ENCODE measurements at regions of chr4 and their contacts with region 1.

Region 1: DNA sequence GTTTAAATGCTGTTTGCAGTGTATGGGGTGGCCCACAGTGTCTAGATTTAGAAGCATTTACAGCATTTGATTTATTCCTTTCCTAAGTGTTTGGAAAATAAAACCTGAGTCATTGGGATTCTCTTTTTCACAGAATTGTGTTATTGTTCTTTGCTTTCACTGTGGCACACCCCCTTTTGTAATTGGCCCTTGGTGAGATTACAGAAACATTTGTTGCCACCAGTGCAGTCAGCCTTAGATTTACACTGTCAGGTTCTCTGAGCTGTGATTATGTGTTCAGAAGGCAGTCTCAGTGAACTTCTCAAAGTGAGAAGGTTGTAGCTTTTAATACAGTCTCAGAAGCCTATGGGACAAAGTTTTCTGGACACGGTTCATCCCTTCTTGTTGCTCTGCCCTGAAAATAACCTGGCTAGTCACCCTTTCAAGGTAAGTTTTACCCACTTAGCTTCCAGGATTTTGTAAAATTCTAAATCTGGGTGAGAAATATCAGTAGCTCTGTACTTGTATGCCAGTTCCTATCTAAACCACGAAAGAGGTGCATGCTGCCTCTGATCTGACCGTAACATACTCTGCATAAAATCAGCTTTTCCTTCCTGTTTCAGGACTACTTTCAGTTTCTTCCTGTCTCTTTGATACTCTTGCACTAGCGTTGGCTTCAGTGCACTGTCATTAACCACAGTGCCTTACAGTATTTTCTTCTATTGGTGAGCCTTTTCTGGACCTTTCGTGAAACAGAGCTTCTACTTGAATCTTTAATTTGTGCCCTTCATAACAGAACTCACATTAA is 12.6 kb downstream of the RUFY3 start:
- DNase-seq: peak; percentile 81
- ATAC-seq: peak; percentile 95
- H3K4me3 ChIP-seq: peak overlapping the region; percentile 5 to 74 (median 37)
- H3K4me3 Mint-ChIP-seq: peak overlapping the region; percentile 73
- H3K27ac ChIP-seq: peak overlapping the region; percentile 70 to 74
- H3K27ac Mint-ChIP-seq: peak overlapping the region; percentile 92
- H3K4me1 ChIP-seq: peaks cover 44 to 45% of the 10 kb centered on the region in 2 donors
- H3K4me1 Mint-ChIP-seq: peaks cover 44% of the 10 kb centered on the region
- H3K27me3 ChIP-seq: no peaks in the 10 kb centered on the region
- H3K27me3 Mint-ChIP-seq: no peaks in the 10 kb centered on the region
- CTCF ChIP-seq: no peak

Region 2: DNA sequence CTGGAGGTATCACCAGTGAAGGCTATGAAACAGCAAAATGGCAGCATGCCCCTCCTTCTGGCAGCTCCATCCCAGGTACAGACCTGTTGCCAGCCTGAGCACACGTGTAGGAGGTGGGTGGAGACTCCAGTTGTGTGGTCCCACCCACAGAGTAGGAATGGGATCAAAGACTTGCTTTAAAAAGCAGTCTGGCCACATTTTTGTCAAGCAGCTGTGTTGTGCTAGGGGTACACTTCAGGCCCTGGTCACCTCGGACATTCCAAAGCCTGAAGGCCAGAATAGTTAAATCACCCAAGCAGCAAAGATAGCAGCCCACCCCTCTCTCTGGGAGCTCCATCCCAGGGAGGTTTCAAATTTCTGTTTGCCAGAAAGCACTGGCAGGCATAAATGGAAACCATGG is 162.6 kb before region 1 on chr4:
- CTCF ChIA-PET with region 1: no interaction called
- POLR2A ChIA-PET with region 1: no interaction called
- intact Hi-C with region 1: no loop called
- DNase-seq: no peak
- ATAC-seq: no peak
- H3K4me3 ChIP-seq: no peak overlapping the region
- H3K4me3 Mint-ChIP-seq: no peak overlapping the region
- H3K27ac ChIP-seq: no peak overlapping the region
- H3K27ac Mint-ChIP-seq: no peak overlapping the region
- H3K4me1 ChIP-seq: no peaks in the 10 kb centered on the region
- H3K4me1 Mint-ChIP-seq: no peaks in the 10 kb centered on the region
- H3K27me3 ChIP-seq: peaks cover 0 to 11% (median 3%) of the 10 kb centered on the region in 4 experiments
- H3K27me3 Mint-ChIP-seq: peaks cover 31% of the 10 kb centered on the region
- CTCF ChIP-seq: no peak

Region 3: DNA sequence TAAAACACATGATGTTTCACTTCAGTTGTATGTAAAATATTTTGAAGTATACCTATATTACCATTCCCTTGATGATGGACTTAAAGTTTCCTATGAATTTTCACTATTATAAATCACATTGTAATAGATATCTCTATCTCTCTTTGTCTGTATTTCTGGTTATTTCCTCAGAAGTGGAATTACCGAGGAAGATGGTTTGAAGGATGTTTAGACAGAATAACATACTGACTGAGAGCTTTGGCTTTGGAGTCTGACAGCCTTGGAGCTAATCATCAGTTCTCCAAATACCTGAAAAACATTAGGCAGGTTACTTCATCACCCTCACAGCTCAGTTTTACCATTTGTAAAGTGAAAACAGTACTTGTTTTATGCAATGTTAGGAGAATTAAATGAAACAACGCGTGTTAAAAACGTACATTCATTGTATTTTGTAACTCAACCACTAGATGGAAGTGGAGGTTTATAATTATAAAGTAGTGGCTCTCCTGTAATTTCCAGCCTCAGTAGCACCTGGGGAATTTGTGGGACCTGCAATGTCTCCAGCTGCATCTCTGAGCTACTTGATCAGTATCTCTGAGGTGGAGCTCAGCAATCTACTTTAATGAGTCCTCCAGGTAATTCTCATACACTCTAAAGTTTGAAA is 82.4 kb before region 1 on chr4:
- CTCF ChIA-PET with region 1: interaction called, 19 read pairs
- POLR2A ChIA-PET with region 1: no interaction called
- intact Hi-C with region 1: loop called (anchors 1 kb)
- DNase-seq: peak; percentile 62
- ATAC-seq: peak; percentile 63
- H3K4me3 ChIP-seq: no peak overlapping the region
- H3K4me3 Mint-ChIP-seq: no peak overlapping the region
- H3K27ac ChIP-seq: no peak overlapping the region
- H3K27ac Mint-ChIP-seq: no peak overlapping the region
- H3K4me1 ChIP-seq: peaks cover 6 to 12% of the 10 kb centered on the region in 2 donors
- H3K4me1 Mint-ChIP-seq: peaks cover 8% of the 10 kb centered on the region
- H3K27me3 ChIP-seq: no peaks in the 10 kb centered on the region
- H3K27me3 Mint-ChIP-seq: no peaks in the 10 kb centered on the region
- CTCF ChIP-seq: peak; percentile 77

Region 4: DNA sequence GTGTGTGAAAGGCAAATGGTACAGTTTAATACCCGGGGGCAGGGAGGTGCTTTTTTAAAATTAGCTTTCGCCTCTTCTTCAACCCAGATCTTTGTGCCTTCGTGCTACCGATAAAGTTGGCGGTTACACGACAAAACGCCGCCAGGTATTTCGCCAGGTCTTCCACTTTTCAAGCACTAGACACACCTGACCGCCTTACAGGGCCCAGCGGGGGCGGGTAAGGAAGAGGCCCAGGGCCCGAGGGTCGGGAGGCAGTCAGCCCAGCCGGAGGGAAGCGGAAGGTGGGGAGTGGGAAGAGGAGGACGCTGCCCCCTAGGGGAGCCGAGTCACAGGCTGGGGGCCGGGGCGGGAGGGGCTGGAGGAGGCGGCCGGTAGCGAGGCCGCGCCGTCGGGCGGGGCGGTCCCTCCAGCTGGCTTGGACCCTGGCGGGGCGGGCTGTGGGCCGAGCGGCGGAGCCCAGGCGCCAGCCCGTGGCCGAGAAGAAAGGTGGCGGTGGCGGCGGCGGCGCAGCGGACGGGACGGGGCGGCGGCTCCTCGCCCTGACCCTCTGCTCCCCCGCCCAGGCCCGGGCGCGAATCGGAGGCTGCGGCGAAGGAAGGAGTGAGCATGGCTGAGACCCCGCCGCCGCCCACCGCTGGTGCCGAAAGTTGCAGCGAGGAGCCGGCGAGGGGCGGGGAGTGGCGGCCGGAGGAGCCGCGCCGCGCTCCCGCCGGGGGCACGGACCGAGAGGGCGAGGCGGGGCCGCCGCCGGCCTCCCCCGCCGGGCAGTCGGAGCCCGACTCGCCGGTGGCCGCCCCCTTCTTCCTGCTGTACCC is 29.8 kb before region 1 on chr4:
- CTCF ChIA-PET with region 1: interaction called, 47 read pairs
- POLR2A ChIA-PET with region 1: interaction called, 29 read pairs
- intact Hi-C with region 1: loop called (anchors 1 kb)
- DNase-seq: peak; percentile 85
- ATAC-seq: peak; percentile 70
- H3K4me3 ChIP-seq: peak overlapping the region; percentile 2 to 88 (median 82)
- H3K4me3 Mint-ChIP-seq: peak overlapping the region; percentile 91
- H3K27ac ChIP-seq: peak overlapping the region; percentile 62 to 80
- H3K27ac Mint-ChIP-seq: peak overlapping the region; percentile 98
- H3K4me1 ChIP-seq: peaks cover 17 to 25% of the 10 kb centered on the region in 2 donors
- H3K4me1 Mint-ChIP-seq: peaks cover 25% of the 10 kb centered on the region
- H3K27me3 ChIP-seq: no peaks in the 10 kb centered on the region
- H3K27me3 Mint-ChIP-seq: no peaks in the 10 kb centered on the region
- CTCF ChIP-seq: peak; percentile 12

Region 5: GRCh38 chr4:70754470-70754869 is 20.1 kb after region 1 on chr4:
- CTCF ChIA-PET with region 1: interaction called, 34 read pairs
- POLR2A ChIA-PET with region 1: interaction called, 14 read pairs
- intact Hi-C with region 1: loop called (anchors 1 kb)
- DNase-seq: peak; percentile 65
- ATAC-seq: peak; percentile 66
- H3K4me3 ChIP-seq: peak overlapping the region in 3 of 5 experiments; percentile 15 to 57 (median 43)
- H3K4me3 Mint-ChIP-seq: peak overlapping the region; percentile 67
- H3K27ac ChIP-seq: peak overlapping the region in 1 of 2 donors; percentile 69
- H3K27ac Mint-ChIP-seq: peak overlapping the region; percentile 33
- H3K4me1 ChIP-seq: peaks cover 30 to 36% of the 10 kb centered on the region in 2 donors
- H3K4me1 Mint-ChIP-seq: peaks cover 50% of the 10 kb centered on the region
- H3K27me3 ChIP-seq: no peaks in the 10 kb centered on the region
- H3K27me3 Mint-ChIP-seq: no peaks in the 10 kb centered on the region
- CTCF ChIP-seq: no peak

Region 6: DNA sequence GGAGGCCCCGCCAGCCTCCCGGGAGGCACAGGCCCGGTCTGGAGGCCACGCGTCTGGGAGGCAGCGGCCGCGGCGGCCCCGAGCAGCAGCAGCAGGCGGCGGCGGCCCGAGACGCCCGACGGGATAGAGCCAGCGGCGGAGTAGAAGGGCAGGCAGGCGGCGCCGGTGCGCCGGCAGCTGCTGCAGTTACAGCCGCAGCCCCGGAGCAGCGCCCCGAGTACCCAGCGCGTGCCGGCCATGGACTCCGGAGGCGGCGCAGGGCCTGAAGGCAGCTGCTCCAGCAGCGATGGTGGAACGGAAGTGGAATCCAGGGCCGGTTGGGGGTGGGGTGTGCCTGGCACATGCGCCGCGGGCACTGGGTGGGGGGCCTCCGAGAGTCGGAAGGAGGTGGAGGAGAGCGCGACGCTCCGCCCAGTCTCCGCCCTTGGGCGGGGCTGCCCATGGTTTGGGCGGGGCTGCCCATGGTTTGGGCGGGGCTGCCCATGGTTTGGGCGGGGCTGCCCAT is 105.3 kb after region 1 on chr4 and contains the start of gene GRSF1:
- CTCF ChIA-PET with region 1: interaction called, 12 read pairs
- POLR2A ChIA-PET with region 1: interaction called, 4 read pairs
- intact Hi-C with region 1: loop called (anchors 10 kb)
- DNase-seq: peak; percentile 95
- ATAC-seq: peak; percentile 86
- H3K4me3 ChIP-seq: peak within 1 kb of the TSS; percentile 27 to 79 (median 73)
- H3K4me3 Mint-ChIP-seq: peak within 1 kb of the TSS; percentile 99
- H3K27ac ChIP-seq: peak within 1 kb of the TSS; percentile 62 to 85
- H3K27ac Mint-ChIP-seq: peak within 1 kb of the TSS; percentile 95
- H3K4me1 ChIP-seq: peaks cover 22 to 46% of the 10 kb centered on the region in 2 donors
- H3K4me1 Mint-ChIP-seq: peaks cover 45% of the 10 kb centered on the region
- H3K27me3 ChIP-seq: no peaks in the 10 kb centered on the region
- H3K27me3 Mint-ChIP-seq: no peaks in the 10 kb centered on the region
- CTCF ChIP-seq: no peak
- total RNA-seq, gene GRSF1: 43.2 and 44.2 TPM in 2 replicates

Region 7: GRCh38 chr4:71009890-71010588 is 275.7 kb after region 1 on chr4:
- CTCF ChIA-PET with region 1: interaction called, 11 read pairs
- POLR2A ChIA-PET with region 1: no interaction called
- intact Hi-C with region 1: no loop called
- DNase-seq: peak; percentile 76
- ATAC-seq: peak; percentile 51
- H3K4me3 ChIP-seq: no peak overlapping the region
- H3K4me3 Mint-ChIP-seq: peak overlapping the region; percentile 59
- H3K27ac ChIP-seq: peak overlapping the region in 1 of 2 donors; percentile 93
- H3K27ac Mint-ChIP-seq: peak overlapping the region; percentile 76
- H3K4me1 ChIP-seq: peaks cover 39 to 42% of the 10 kb centered on the region in 2 donors
- H3K4me1 Mint-ChIP-seq: peaks cover 49% of the 10 kb centered on the region
- H3K27me3 ChIP-seq: no peaks in the 10 kb centered on the region
- H3K27me3 Mint-ChIP-seq: no peaks in the 10 kb centered on the region
- CTCF ChIP-seq: peak; percentile 85

Measured in B cell (primary cell).